Dendritic cell treated with granulocyte-macrophage colony-stimulating factor and Interleukin-4, amounts not matched to agents 40 ng/mL and 50 ng/mL, for 4 days (primary cell): ENCODE measurements at regions of chr2 and their contacts with region 1.

Region 1: GRCh38 chr2:190319555-190320498 is at the start of gene HIBCH:
- H3K4me3 Mint-ChIP-seq: peak within 1 kb of the TSS; percentile 82
- H3K27ac Mint-ChIP-seq: peak within 1 kb of the TSS; percentile 80
- H3K4me1 Mint-ChIP-seq: peaks cover 15% of the 10 kb centered on the region
- H3K27me3 Mint-ChIP-seq: no peaks in the 10 kb centered on the region

Region 2: GRCh38 chr2:190343500-190344275 is 23.9 kb after region 1 on chr2 and contains the start of gene INPP1:
- intact Hi-C with region 1: loop called (anchors 2 kb)
- H3K4me3 Mint-ChIP-seq: peak within 1 kb of the TSS; percentile 94
- H3K27ac Mint-ChIP-seq: peak within 1 kb of the TSS; percentile 92
- H3K4me1 Mint-ChIP-seq: peaks cover 24% of the 10 kb centered on the region
- H3K27me3 Mint-ChIP-seq: no peaks in the 10 kb centered on the region

Region 3: GRCh38 chr2:190355980-190356644 is 36.3 kb after region 1 on chr2:
- intact Hi-C with region 1: no loop called
- H3K4me3 Mint-ChIP-seq: no peak overlapping the region
- H3K27ac Mint-ChIP-seq: no peak overlapping the region
- H3K4me1 Mint-ChIP-seq: peaks cover 23% of the 10 kb centered on the region
- H3K27me3 Mint-ChIP-seq: no peaks in the 10 kb centered on the region

Region 4: DNA sequence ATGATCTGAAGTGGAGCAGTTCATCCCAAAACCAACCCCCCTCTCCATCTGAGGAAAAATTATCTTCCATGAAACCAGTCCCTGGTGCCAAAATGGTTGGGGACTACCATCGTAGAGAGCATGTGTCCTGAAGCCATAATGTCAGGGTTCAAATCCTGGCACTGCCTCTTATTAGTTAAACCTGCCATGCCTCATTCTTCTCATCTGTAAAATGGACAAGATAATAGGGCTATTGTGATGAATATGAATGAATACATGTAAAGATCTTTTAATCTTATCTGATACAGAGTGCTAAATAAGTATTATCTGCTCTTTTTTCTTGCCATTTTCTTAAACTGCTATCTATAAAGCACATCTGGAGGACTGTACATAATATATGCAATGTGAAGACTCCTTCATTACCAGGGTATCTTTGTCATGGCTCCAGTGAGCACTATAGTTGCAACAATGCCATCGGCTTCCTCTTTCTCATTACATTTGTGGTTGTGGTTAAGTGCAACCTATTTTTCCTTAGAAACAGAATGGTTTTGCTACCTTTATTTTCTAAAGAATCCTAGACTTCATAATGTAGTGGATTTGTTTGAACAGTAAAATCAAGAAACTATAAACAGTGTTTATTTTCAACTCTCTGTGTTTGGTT is 115.3 kb after region 1 on chr2:
- intact Hi-C with region 1: no loop called
- H3K4me3 Mint-ChIP-seq: no peak overlapping the region
- H3K27ac Mint-ChIP-seq: no peak overlapping the region
- H3K4me1 Mint-ChIP-seq: peaks cover 47% of the 10 kb centered on the region
- H3K27me3 Mint-ChIP-seq: no peaks in the 10 kb centered on the region